ENCODE measurements at regions of chr6 and their contacts with region 1.

Region 1: DNA sequence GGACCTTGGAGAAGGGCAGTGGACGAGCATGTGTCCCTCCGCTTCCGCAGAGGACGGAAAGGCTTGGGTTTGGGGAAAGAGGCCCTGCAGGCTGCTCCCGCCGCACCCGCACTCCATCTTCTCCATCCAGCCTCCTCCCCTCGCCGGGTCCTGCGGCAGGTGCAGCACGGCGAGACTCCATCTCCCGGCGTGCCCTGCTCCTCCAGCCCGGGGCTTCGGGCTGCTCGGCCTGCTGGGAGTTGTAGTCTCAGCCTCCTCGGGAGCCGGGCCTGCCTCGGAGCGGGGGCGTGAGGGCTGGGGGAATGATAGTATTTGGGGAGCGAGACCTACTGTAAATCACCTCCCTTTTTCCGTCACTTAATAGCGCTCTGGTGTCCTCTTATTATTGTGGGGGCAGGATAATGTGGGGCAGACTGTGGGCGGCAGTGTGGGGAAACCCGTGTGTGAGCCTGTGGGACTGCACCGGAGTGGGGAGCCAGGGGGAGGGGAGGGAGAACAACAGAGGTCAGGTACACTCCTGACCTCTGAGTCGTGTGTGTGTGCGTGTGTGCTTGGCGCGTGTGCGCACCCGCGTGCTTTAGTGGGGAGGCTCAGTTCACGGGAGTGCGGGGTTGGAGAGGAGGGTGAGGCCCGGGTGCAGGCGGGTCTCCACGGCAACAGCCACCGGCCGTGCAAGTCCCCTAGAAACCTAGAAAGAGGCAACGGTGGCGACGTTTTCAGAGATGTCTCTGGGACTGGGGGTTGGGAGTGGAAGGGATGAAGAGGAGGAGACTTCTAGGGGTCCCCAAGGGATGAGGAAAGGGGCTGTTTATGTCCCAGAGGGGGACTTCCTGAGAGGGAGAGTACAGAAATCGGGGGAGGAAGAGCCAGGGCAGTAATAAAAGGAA is 4.1 kb downstream of the TTBK1 start:
- DNase-seq: peak; percentile 73
- H3K4me3 Mint-ChIP-seq: peak overlapping the region; percentile 77
- H3K27ac Mint-ChIP-seq: peak overlapping the region; percentile 77
- H3K4me1 Mint-ChIP-seq: peaks cover 26% of the 10 kb centered on the region
- H3K27me3 Mint-ChIP-seq: peaks cover 19% of the 10 kb centered on the region

Region 2: GRCh38 chr6:43228951-43229802 is 18.2 kb before region 1 on chr6 and contains the start of gene DNPH1:
- intact Hi-C with region 1: loop called (anchors 2 kb)
- DNase-seq: peak; percentile 77
- H3K4me3 Mint-ChIP-seq: peak within 1 kb of the TSS; percentile 88
- H3K27ac Mint-ChIP-seq: peak within 1 kb of the TSS; percentile 92
- H3K4me1 Mint-ChIP-seq: peaks cover 24% of the 10 kb centered on the region
- H3K27me3 Mint-ChIP-seq: peaks cover 16% of the 10 kb centered on the region
- total RNA-seq, gene DNPH1: 70.5 and 76.7 TPM in 2 replicates

Region 3: GRCh38 chr6:43369174-43370022 is 122.0 kb after region 1 on chr6 and contains the start of gene ZNF318:
- intact Hi-C with region 1: loop called (anchors 5 kb)
- DNase-seq: peak; percentile 93
- H3K4me3 Mint-ChIP-seq: peak within 1 kb of the TSS; percentile 82
- H3K27ac Mint-ChIP-seq: peak within 1 kb of the TSS; percentile 91
- H3K4me1 Mint-ChIP-seq: peaks cover 31% of the 10 kb centered on the region
- H3K27me3 Mint-ChIP-seq: peaks cover 6% of the 10 kb centered on the region
- total RNA-seq, gene ZNF318: 11.5 and 13.2 TPM in 2 replicates

Region 4: GRCh38 chr6:43559328-43559727 is 312.0 kb after region 1 on chr6:
- intact Hi-C with region 1: no loop called
- DNase-seq: no peak
- H3K4me3 Mint-ChIP-seq: no peak overlapping the region
- H3K27ac Mint-ChIP-seq: no peak overlapping the region
- H3K4me1 Mint-ChIP-seq: no peaks in the 10 kb centered on the region
- H3K27me3 Mint-ChIP-seq: no peaks in the 10 kb centered on the region